GM10248 (cell line): ENCODE measurements at regions of chr1 and their contacts with region 1.

Region 1: DNA sequence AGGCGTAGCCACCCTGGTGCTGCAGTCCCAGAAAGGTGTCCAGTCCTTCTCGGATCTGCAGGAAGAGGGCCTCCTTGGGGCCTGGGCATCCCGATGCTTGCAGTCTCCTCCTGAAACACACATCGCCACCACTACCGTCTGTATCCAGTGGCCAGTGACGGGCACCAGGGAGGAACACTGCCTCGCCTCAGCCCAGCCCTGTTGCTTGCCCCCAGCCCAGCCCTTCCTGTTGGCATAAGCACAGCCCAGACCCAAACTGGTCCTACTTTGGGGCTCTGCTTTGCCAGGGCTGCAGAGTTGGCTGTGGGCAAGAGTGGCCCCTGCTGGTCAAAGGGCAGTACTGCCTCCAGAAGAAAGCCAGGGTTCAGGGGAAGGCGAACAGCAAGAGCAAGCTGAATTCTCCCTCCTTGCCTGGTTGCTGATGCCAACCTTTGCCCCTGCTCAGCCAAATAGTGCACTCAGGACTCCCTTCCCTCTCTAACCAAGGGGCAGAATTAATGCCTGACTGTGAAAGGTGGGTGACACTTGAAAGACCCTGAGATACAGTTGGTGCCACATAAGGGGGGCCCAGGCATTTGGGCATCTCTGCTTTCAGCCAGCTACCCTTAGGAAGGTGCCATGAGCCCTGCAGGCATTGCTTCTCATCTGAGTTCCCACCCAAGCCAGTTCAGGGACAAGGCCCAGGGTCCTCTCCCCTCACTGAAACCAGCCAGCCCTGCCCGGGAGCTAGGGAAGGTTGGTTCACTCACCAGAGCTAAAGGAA is 11.1 kb upstream of the ARHGEF2 start:
- DNase-seq: peak; percentile 84
- CTCF ChIP-seq: peak; percentile 99

Region 2: DNA sequence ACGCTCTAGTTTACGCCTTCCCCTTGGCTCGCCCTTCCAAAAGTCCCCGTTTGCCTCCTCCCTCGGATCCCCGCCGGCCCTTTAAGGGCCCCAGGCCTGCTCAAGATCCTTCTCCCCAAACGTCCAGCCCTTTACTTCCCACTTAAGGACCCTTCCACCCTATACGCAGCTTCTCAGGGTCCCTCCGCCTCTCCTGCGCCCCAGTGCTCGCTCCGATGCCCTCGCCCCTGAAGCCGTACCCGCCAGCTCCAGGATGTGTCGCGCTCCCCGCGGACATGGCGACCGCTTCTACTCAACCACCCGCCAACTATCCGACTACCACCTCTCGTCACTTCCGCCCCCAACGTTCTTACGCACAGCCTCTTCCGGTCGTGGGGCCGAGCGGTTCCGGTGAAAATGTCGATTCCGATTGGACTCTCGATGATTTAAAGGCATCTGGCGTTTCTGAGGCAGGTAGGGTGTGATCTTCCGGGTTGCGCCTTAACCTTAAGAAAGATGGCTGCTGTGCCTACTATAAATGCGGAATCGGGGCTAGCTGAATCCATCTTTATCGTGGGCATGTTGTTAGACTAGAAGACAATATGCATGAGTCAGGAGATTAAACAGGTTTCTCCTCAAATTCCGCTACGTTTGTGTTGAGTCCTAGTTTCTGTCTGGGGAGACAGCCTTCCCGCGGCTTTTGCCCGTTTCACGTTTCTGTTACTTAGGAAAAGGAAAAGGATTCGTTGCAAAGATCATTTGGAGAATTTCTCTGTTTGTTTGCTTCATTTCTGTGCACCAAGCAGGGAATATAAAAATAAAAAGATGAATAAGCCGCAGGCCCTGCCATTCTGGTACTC is 55.1 kb before region 1 on chr1 and contains the start of gene KHDC4:
- CTCF ChIA-PET with region 1: interaction called, 69 read pairs
- POLR2A ChIA-PET with region 1: no interaction called
- DNase-seq: peak; percentile 95
- CTCF ChIP-seq: no peak

Region 3: GRCh38 chr1:155961937-155962336 is 27.5 kb before region 1 on chr1:
- CTCF ChIA-PET with region 1: interaction called, 215 read pairs
- POLR2A ChIA-PET with region 1: no interaction called
- DNase-seq: no peak
- CTCF ChIP-seq: peak; percentile 28

Region 4: DNA sequence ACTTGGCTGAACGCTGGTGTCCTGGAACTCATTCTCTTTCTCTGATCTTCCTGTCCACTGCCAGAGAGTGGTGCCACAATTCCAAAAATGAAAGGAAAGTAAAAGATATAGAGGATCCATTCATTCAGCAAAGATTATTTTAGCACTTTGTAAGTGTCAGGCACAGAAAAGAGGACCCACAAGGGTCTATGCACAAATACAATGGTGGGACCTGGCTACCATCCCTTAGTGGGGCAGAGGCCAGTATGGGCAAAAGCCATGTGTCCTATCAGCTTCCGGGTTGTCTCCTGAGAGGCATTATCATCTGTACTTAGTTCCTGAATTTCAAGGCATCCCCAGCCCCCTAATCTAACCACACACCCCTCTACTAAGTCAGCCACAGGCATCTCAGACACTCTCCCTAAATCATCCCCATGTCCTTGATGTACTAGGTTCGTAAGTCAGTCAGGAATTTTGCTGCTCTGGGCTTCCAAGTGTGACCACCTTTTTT is 12.3 kb after region 1 on chr1:
- CTCF ChIA-PET with region 1: interaction called, 215 read pairs
- POLR2A ChIA-PET with region 1: no interaction called
- DNase-seq: no peak
- CTCF ChIP-seq: no peak

Region 5: GRCh38 chr1:156014826-156015225 is 25.4 kb after region 1 on chr1:
- CTCF ChIA-PET with region 1: interaction called, 16 read pairs
- POLR2A ChIA-PET with region 1: no interaction called
- DNase-seq: no peak
- CTCF ChIP-seq: no peak